Mammary epithelial cell (primary cell): ENCODE measurements at regions of chr19 and their contacts with region 1.

Region 1: DNA sequence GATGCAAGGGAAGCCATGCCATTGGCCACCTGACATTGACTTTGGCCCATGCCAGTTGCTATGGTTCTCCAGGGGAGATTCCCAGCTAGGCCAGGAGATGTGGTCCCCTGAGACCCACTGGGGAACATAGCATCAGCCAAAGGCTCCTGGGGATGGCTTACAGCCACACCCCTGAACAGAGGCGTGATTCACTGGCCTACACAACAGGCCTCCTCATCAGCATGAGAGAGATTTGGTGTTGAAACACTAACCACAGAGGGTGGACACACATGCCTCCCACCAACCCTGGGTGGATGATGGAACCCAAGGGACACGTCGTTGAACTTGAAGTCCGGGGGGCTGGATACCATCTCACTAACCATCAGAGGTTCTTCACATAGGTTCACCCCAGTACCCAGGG is 14.4 kb downstream of the IQCN start:
- DNase-seq: no peak
- H3K4me3 ChIP-seq: no peak overlapping the region
- H3K27ac ChIP-seq: no peak overlapping the region
- H3K4me1 ChIP-seq: peaks cover 4% of the 10 kb centered on the region
- H3K27me3 ChIP-seq: no peaks in the 10 kb centered on the region
- CTCF ChIP-seq: no peak

Region 2: DNA sequence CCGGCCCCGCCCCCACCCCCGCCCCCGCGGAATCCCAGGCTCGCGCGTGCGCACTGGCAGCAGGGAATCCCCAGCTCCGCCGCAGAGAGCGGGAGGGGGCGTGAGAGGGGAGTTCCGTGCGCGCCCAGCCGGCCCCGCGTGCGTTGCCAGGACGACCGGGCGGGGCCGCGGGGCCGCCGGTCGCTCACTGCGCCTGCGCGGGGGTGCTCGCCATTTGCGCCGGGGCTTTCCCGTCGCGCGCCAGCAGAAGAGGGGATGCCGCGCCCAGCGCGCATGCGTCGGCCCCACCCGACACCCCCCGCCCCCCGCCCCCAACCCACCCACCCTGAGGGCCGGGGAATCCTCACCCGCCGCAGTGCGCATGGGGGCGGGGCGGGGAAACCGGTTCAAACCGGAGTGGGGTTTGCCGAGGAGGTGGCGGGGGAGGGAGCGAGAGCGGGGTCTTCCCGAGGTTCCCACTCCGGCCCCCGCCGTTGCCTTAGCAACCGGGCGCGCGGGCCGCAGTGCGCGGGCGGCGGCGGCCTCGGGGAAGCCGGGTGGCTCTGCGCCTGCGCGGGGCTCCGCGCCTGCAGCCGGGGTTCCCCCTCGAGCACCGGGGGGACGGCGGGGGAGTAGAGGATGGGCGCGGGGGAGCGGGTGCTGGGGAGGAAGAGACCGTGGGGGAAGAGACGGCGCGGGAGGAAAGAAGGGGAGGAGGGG is 311.9 kb before region 1 on chr19:
- CTCF ChIA-PET with region 1: no interaction called
- dilution Hi-C with region 1: loop called (anchors 10 kb)
- in situ Hi-C with region 1: no loop called
- intact Hi-C with region 1: no loop called
- DNase-seq: peak; percentile 87
- H3K4me3 ChIP-seq: peak overlapping the region; percentile 25 to 65 (median 46)
- H3K27ac ChIP-seq: no peak overlapping the region
- H3K4me1 ChIP-seq: peaks cover 23% of the 10 kb centered on the region
- H3K27me3 ChIP-seq: peaks cover 33% of the 10 kb centered on the region
- CTCF ChIP-seq: no peak

Region 3: DNA sequence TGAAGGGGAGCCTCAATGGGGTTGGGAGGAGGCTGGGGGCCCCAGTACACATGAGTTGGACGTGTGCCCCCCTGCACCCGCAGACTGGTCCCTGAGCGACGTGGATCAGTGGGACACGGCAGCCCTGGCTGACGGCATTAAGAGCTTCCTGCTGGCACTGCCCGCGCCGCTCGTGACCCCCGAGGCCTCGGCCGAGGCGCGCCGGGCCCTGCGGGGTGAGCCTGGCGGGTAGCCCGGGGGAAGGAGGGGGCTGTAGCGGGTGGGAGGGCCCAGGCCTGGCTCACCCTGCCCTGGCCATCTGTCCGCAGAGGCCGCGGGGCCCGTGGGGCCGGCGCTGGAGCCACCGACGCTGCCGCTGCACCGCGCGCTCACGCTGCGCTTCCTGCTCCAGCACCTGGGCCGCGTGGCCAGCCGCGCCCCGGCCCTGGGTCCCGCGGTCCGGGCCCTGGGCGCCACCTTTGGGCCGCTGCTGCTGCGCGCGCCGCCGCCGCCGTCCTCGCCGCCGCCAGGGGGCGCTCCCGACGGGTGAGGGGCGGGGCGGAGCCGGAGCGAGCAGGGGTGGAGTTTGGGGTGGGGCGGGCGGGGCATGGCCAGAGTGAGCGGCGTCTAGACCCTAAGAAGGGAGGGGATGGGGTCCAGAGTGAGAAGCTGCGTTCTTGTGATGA is 98.8 kb before region 1 on chr19:
- CTCF ChIA-PET with region 1: no interaction called
- dilution Hi-C with region 1: loop called (anchors 5 kb)
- in situ Hi-C with region 1: no loop called
- intact Hi-C with region 1: no loop called
- DNase-seq: peak; percentile 57
- H3K4me3 ChIP-seq: peak overlapping the region in 2 of 3 experiments; percentile 43 to 44
- H3K27ac ChIP-seq: no peak overlapping the region
- H3K4me1 ChIP-seq: peaks cover 40% of the 10 kb centered on the region
- H3K27me3 ChIP-seq: no peaks in the 10 kb centered on the region
- CTCF ChIP-seq: peak; percentile 41 to 50

Region 4: DNA sequence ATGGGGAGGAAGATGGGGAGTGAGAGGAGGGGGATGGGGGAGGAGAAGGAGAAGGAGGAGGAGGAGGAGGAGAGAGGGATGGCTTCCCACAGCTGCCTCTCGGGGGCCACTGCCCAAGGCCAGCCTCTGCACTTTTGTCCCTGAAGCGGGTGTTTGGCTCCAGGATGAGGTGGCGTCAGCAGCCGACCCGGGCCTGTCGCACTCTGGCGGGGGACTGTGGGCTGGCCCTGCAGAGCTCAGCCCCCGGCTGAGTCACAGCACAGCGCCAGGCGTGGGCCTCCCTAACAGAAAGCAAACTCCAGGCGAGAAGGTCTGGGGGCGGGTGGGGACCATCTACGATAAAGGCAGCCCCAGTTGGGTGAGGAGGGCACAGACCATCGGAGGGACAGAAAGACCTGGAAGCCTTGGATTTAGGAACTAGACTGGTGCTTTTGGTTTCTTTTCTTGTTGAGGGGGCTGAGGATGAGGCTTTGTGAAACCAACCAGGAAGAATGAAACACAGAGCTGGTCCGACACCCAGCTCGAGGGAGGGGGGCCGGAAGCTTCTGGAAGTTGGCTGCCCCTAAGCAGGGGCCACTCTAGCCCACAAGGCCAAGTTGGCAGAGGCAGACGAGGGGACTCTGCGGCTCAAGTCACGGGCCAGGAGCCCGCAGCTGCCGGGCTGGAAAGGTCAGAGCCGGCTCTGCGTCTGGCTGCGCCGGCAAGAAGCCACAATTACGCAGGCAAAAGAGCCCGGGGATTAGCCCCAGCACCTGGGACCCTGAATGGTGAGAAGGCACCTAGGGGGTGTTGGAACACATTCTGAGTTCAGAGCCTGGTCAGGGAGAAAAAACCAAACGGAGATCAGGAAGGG is 44.8 kb after region 1 on chr19:
- CTCF ChIA-PET with region 1: no interaction called
- dilution Hi-C with region 1: loop called (anchors 5 kb)
- in situ Hi-C with region 1: no loop called
- intact Hi-C with region 1: no loop called
- DNase-seq: peak; percentile 48
- H3K4me3 ChIP-seq: peak overlapping the region; percentile 8 to 21 (median 11)
- H3K27ac ChIP-seq: peak overlapping the region; percentile 66
- H3K4me1 ChIP-seq: peaks cover 28% of the 10 kb centered on the region
- H3K27me3 ChIP-seq: no peaks in the 10 kb centered on the region
- CTCF ChIP-seq: no peak

Region 5: DNA sequence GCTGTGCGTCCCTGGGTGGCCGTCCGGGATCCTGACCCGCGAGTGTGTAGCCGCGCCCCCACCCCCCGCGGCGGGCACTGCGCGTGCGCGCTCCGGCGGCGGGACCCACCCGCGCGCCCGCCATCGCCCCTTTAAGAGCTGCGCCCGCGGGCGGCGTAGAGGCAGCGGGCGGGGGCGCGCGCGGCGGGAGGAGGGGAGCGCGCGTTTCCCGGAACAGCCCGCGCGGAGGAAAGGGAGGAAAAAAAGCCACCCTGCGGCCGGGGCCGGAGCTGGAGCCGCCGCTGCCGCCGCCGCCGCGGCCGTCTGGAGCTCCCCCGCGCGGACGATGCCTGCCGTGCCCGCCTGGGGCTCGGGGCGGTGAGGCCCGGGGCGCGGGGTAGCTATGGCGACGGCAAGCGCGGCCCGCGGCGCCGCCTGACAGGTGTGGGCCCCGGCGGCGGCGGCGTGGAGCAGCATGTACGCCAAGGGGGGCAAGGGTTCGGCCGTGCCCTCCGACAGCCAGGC is 159.4 kb after region 1 on chr19 and contains the start of gene SSBP4:
- CTCF ChIA-PET with region 1: no interaction called
- dilution Hi-C with region 1: loop called (anchors 5 kb)
- in situ Hi-C with region 1: no loop called
- intact Hi-C with region 1: no loop called
- DNase-seq: peak; percentile 68
- H3K4me3 ChIP-seq: peak within 1 kb of the TSS; percentile 59 to 69 (median 60)
- H3K27ac ChIP-seq: no peak within 1 kb of the TSS
- H3K4me1 ChIP-seq: peaks cover 27% of the 10 kb centered on the region
- H3K27me3 ChIP-seq: no peaks in the 10 kb centered on the region
- CTCF ChIP-seq: peak in 1 of 2 donors; percentile 31
- total RNA-seq, gene SSBP4: 34.0 to 41.0 TPM